ENCODE measurements at regions of chr18 and their contacts with region 1.

Region 1: DNA sequence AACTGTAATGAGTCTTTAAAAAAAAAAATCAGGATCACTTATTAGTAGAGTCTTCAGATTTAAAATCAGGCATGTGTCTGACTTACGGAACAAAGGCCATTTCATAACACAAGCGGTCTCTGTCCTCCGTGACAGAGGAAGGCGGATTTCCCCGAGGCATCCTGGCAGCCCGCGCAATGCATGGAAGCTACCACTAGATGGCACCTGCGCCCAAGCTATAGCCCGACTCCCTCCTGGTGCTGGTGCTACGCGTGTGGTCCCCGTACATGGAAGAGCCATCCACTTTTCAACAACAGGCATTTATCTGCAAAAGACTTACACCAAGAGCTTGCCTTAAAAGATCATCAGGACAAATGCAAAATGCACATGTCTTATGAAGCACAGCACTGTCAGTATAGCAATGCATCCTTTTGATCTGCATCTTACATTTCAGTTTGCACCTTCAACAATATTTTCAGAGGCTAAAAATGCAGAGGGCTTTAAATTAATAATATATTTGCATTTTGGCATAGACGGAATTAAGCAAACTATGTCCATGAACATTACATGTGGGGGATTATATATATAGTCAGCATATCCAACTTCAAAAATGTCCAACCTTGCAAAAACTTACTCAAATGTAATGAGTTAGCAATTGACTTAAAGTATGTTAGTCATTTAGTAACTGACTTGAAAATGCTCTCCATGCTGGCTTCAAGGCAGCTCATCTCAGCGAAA is 96.0 kb downstream of the ZNF516 start:
- DNase-seq: peak; percentile 75 to 96 (median 88)
- H3K4me3 ChIP-seq: no peak overlapping the region
- H3K27ac ChIP-seq: no peak overlapping the region
- H3K4me1 ChIP-seq: peaks cover 4 to 44% of the 10 kb centered on the region in 2 donors
- H3K27me3 ChIP-seq: no peaks in the 10 kb centered on the region
- CTCF ChIP-seq: peak; percentile 85 to 98 (median 98)
- POLR2A ChIP-seq: no peak

Region 2: GRCh38 chr18:76686737-76687262 is 287.7 kb after region 1 on chr18:
- intact Hi-C with region 1: loop called (anchors 5 kb)
- DNase-seq: peak; percentile 68 to 89 (median 75)
- H3K4me3 ChIP-seq: no peak overlapping the region
- H3K27ac ChIP-seq: peak overlapping the region in 2 of 5 donors; percentile 72 to 73
- H3K4me1 ChIP-seq: peaks cover 12 to 14% of the 10 kb centered on the region in 2 donors
- H3K27me3 ChIP-seq: no peaks in the 10 kb centered on the region
- CTCF ChIP-seq: peak; percentile 38 to 83 (median 72)
- POLR2A ChIP-seq: no peak

Region 3: DNA sequence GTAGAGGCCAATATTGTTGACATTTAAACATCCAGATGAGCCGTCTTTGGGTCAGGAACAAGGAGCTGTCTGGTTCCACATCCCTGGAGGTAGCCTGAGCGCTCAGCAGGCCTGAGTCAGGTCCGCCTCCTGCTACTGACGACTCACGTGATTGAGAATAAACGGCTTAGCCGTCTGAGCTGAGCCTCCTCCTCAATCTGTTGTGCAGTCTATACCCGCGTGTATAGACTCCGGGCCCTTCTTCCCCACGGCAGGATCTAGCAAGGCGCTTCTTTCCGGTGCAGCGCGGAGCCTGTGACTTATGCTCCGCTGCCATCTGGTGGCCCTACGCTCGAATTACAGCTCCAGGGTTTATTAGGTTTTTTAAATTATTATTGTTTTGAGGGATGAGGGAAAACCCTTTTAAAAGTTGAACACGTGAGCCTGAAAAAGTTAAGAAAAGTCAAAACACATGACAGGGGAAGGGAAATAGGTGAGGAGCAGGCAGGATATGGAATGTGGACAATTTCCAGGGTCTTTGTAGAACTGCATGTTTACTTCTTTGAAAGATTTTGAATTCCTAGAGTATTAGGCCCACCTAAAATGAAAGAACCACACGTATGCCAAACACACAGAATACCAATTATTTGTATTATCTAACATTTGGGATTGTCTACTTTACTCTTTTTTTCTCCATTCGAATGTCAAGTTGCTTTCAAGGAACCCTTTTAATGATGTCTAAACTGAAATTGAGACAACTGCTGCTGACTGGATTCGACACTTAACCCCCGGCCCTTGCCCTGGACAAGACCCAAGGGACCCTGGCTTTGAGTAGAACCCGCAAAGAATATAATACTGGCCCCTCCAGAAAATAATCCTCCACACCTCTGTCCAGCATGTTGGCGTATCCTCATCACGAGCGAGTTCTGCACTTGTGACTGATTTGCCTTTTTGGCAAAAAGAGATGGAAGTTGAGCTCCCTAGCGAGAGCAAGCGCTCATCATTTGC is 310.9 kb after region 1 on chr18:
- intact Hi-C with region 1: loop called (anchors 5 kb)
- DNase-seq: peak; percentile 48 to 84 (median 76)
- H3K4me3 ChIP-seq: no peak overlapping the region
- H3K27ac ChIP-seq: no peak overlapping the region
- H3K4me1 ChIP-seq: no peaks in the 10 kb centered on the region
- H3K27me3 ChIP-seq: no peaks in the 10 kb centered on the region
- CTCF ChIP-seq: peak; percentile 85 to 95 (median 92)
- POLR2A ChIP-seq: no peak